ENCODE measurements at regions of chr5 and their contacts with region 1.

Region 1: DNA sequence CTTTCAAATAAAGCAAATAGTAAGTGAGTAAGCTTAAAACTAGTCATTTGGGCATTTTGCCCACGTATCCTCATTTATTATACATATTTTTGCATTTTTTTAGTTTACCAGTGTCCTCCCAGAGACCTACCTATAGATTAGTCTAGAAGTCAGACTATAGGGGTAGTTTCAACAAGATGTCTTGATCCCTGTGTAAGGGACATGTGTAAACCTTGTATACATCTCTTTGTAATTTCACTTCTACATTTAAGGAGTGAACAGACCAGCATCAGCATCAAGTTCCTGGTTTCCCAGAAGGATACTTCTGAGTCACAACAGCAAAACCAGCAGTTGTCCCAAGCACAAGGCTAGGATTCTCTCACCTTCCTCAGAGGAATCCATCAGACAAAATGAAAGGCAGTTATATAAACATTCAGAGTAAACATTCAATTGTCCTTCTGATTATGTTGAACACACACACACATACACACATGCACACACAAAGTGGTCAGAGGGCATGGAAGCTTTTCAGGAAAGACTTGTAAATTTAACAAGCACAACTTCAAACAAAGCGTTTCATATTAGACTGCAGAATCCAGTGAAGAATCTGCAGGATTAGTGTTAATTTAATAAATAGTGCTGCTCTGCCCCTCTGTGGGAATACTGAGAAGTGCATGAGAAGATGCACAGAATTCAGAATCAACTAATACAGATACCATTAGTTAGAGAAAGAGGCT is 55.4 kb downstream of the HINT1 start:
- DNase-seq: peak in 4 of 5 donors; percentile 41 to 58 (median 54)
- H3K4me3 ChIP-seq: no peak overlapping the region
- H3K4me3 Mint-ChIP-seq: no peak overlapping the region
- H3K27ac ChIP-seq: no peak overlapping the region
- H3K27ac Mint-ChIP-seq: no peak overlapping the region
- H3K4me1 ChIP-seq: peaks cover 5% of the 10 kb centered on the region
- H3K4me1 Mint-ChIP-seq: peaks cover 0 to 4% (median 4%) of the 10 kb centered on the region in 4 donors
- H3K27me3 ChIP-seq: no peaks in the 10 kb centered on the region
- H3K27me3 Mint-ChIP-seq: peaks cover 0 to 2% of the 10 kb centered on the region in 2 donors

Region 2: GRCh38 chr5:130109152-130109551 is 1000.5 kb before region 1 on chr5:
- CTCF ChIA-PET with region 1: interaction called, 3 read pairs
- POLR2A ChIA-PET with region 1: no interaction called
- intact Hi-C with region 1: loop called (anchors 1 kb)
- DNase-seq: peak in 4 of 5 donors; percentile 8 to 23 (median 11)
- H3K4me3 ChIP-seq: no peak overlapping the region
- H3K4me3 Mint-ChIP-seq: no peak overlapping the region
- H3K27ac ChIP-seq: no peak overlapping the region
- H3K27ac Mint-ChIP-seq: no peak overlapping the region
- H3K4me1 ChIP-seq: no peaks in the 10 kb centered on the region
- H3K4me1 Mint-ChIP-seq: no peaks in the 10 kb centered on the region
- H3K27me3 ChIP-seq: no peaks in the 10 kb centered on the region
- H3K27me3 Mint-ChIP-seq: no peaks in the 10 kb centered on the region

Region 3: DNA sequence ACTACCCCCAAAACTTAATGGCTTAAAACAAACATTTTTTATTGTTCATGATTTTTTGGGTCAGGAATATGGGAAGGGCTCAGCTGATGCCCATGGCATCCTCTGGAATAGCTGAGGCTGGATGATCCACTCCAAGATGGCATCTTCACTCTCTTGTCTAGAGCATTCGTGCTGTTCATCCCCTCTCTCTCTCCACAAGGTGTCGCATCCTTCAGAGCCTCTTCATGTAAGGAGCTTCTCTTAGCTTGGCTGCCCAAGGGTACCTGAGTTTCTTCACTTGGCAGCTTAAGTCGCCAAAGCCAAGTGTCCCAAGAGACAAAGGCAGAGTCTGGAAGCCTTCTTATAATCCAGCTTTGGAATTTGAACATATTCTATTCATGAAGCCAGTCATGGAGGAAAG is 910.8 kb before region 1 on chr5:
- CTCF ChIA-PET with region 1: interaction called, 3 read pairs
- POLR2A ChIA-PET with region 1: no interaction called
- intact Hi-C with region 1: loop called (anchors 5 kb)
- DNase-seq: no peak
- H3K4me3 ChIP-seq: no peak overlapping the region
- H3K4me3 Mint-ChIP-seq: no peak overlapping the region
- H3K27ac ChIP-seq: no peak overlapping the region
- H3K27ac Mint-ChIP-seq: no peak overlapping the region
- H3K4me1 ChIP-seq: no peaks in the 10 kb centered on the region
- H3K4me1 Mint-ChIP-seq: no peaks in the 10 kb centered on the region
- H3K27me3 ChIP-seq: no peaks in the 10 kb centered on the region
- H3K27me3 Mint-ChIP-seq: peaks cover 0 to 3% of the 10 kb centered on the region in 2 donors

Region 4: DNA sequence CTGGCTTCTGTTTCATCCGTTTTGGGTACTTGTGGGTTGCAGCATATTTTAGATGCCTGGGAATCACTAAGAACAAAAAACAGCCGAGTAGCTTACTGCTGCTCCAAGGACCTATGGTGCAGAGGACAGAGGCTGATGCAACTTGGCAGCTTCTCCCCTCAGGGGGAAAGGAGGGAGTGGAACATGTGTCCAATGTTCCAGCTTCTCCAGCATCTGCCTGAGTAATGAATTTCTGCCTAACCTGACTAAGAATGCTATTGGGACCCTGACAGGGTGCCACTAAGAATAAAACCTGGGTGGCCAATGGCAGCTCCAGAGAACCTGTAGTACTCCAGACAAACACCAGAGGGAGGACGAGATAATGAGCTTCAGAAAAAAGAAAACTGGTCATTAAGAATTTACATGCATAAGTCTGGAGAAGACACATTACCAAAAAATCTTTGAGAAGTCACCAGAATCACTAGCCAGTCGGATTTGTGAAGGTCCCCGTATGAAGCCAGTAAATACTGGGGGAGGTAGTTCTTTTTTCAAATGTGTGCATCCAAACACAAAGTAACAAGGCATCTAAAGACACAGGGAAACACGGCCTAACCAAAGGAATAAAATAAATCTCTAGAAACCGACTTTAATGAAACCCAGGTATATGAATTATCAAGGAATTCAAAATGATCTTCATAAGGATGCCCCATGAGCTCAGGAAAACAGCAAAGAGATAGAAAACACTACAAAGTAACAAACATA is 238.2 kb before region 1 on chr5:
- CTCF ChIA-PET with region 1: interaction called, 56 read pairs
- POLR2A ChIA-PET with region 1: no interaction called
- intact Hi-C with region 1: loop called (anchors 1 kb)
- DNase-seq: peak; percentile 34 to 60 (median 49)
- H3K4me3 ChIP-seq: no peak overlapping the region
- H3K4me3 Mint-ChIP-seq: no peak overlapping the region
- H3K27ac ChIP-seq: no peak overlapping the region
- H3K27ac Mint-ChIP-seq: no peak overlapping the region
- H3K4me1 ChIP-seq: no peaks in the 10 kb centered on the region
- H3K4me1 Mint-ChIP-seq: no peaks in the 10 kb centered on the region
- H3K27me3 ChIP-seq: no peaks in the 10 kb centered on the region
- H3K27me3 Mint-ChIP-seq: no peaks in the 10 kb centered on the region